Activated CD4-positive, alpha-beta T cell treated with anti-CD3 and anti-CD28 coated beads, Interleukin-2, amount 10 ng/mL, durations not matched to agents 7 days and 5 days (primary cell): ENCODE measurements at regions of chr22 and their contacts with region 1.

Region 1: GRCh38 chr22:49994368-49995040 is 18.1 kb downstream of the IL17REL start:
- DNase-seq: no peak
- H3K4me3 Mint-ChIP-seq: no peak overlapping the region
- H3K27ac Mint-ChIP-seq: no peak overlapping the region
- H3K4me1 Mint-ChIP-seq: peaks cover 14% of the 10 kb centered on the region
- H3K27me3 Mint-ChIP-seq: peaks cover 7% of the 10 kb centered on the region

Region 2: GRCh38 chr22:50018608-50019285 is 24.2 kb after region 1 on chr22:
- CTCF ChIA-PET with region 1: interaction called, 10 read pairs
- POLR2A ChIA-PET with region 1: no interaction called
- DNase-seq: no peak
- H3K4me3 Mint-ChIP-seq: no peak overlapping the region
- H3K27ac Mint-ChIP-seq: no peak overlapping the region
- H3K4me1 Mint-ChIP-seq: peaks cover 24% of the 10 kb centered on the region
- H3K27me3 Mint-ChIP-seq: no peaks in the 10 kb centered on the region